HepG2 (cell line): ENCODE measurements at regions of chrX and their contacts with region 1.

Region 1: GRCh38 chrX:13646154-13646549 is 6.8 kb upstream of the TCEANC start:
- DNase-seq: peak; percentile 30
- ATAC-seq: peak; percentile 79
- H3K4me3 ChIP-seq: no peak overlapping the region
- H3K27ac ChIP-seq: no peak overlapping the region
- H3K4me1 ChIP-seq: no peaks in the 10 kb centered on the region
- H3K27me3 ChIP-seq: no peaks in the 10 kb centered on the region
- CTCF ChIP-seq: peak; percentile 63
- EP300 ChIP-seq: no peak
- POLR2A ChIP-seq: no peak
- RAD21 ChIP-seq: 0 out of 2 replicates have a peak, but pooled peaks have one; percentile 23

Region 2: GRCh38 chrX:13515211-13515930 is 130.8 kb before region 1 on chrX:
- CTCF ChIA-PET with region 1: no interaction called
- POLR2A ChIA-PET with region 1: no interaction called
- in situ Hi-C with region 1: loop called (anchors 10 kb)
- intact Hi-C with region 1: no loop called
- DNase-seq: no peak
- ATAC-seq: no peak
- H3K4me3 ChIP-seq: no peak overlapping the region
- H3K27ac ChIP-seq: no peak overlapping the region
- H3K4me1 ChIP-seq: no peaks in the 10 kb centered on the region
- H3K27me3 ChIP-seq: no peaks in the 10 kb centered on the region
- CTCF ChIP-seq: no peak
- EP300 ChIP-seq: no peak
- POLR2A ChIP-seq: no peak
- RAD21 ChIP-seq: no peak